PC-9 (cell line): ENCODE measurements at regions of chr4 and their contacts with region 1.

Region 1: DNA sequence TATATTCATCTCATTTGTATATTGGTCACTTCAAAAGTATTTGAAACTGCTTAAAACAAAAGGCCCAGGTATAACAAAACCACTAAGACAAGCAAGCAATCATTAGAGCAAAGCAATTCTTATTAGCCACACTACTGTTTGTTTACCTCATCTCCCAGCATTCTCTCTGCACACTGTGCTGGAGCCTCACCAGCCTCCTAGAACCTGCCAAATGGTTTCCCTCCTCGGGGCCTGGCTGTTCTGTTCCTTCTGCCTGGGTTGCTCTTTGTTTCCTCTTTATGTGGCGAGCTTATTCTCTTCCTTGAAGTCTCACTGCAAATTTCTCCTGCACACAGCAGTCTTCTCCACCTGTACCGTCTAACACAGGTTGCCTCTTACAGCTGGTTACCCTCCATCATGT is 67.5 kb upstream of the MND1 start:
- DNase-seq: no peak
- H3K4me3 ChIP-seq: no peak overlapping the region
- H3K27ac ChIP-seq: no peak overlapping the region
- H3K4me1 ChIP-seq: no peaks in the 10 kb centered on the region
- H3K27me3 ChIP-seq: no peaks in the 10 kb centered on the region
- CTCF ChIP-seq: no peak

Region 2: GRCh38 chr4:153115322-153116290 is 161.4 kb before region 1 on chr4:
- CTCF ChIA-PET with region 1: no interaction called
- POLR2A ChIA-PET with region 1: interaction called, 16 read pairs
- intact Hi-C with region 1: no loop called
- DNase-seq: peak; percentile 45 to 85
- H3K4me3 ChIP-seq: peak overlapping the region; percentile 32; the same call in 1 of the 2 replicates
- H3K27ac ChIP-seq: peak overlapping the region; percentile 54
- H3K4me1 ChIP-seq: peaks cover 16% of the 10 kb centered on the region
- H3K27me3 ChIP-seq: no peaks in the 10 kb centered on the region
- CTCF ChIP-seq: no peak

Region 3: DNA sequence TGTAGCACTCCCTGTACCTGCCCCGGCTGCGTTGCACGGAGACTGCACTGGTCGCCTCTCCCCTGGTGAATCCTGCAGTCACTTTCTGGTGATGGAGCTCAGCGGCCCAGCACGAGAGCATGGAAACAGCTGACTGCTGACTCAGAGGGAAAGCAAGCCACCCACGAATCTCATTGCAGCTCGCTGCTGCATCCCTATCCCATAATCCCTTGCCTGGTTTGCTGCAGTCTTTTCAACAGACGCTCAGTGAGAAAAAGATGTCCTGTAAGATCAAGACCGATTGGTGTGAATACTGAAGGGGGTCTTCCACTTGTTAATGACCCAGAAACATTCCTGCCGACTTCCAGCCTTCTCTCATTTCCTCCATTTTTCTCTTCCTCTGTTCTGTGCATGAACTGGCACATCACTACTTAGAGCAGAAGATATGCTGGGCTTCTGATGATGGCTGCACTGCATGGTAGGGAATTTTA is 19.8 kb before region 1 on chr4:
- CTCF ChIA-PET with region 1: no interaction called
- POLR2A ChIA-PET with region 1: no interaction called
- intact Hi-C with region 1: no loop called
- DNase-seq: no peak
- H3K4me3 ChIP-seq: no peak overlapping the region
- H3K27ac ChIP-seq: no peak overlapping the region
- H3K4me1 ChIP-seq: no peaks in the 10 kb centered on the region
- H3K27me3 ChIP-seq: no peaks in the 10 kb centered on the region
- CTCF ChIP-seq: no peak

Region 4: GRCh38 chr4:153850533-153851280 is 573.7 kb after region 1 on chr4:
- CTCF ChIA-PET with region 1: no interaction called
- POLR2A ChIA-PET with region 1: no interaction called
- intact Hi-C with region 1: no loop called
- DNase-seq: no peak
- H3K4me3 ChIP-seq: no peak overlapping the region
- H3K27ac ChIP-seq: no peak overlapping the region
- H3K4me1 ChIP-seq: no peaks in the 10 kb centered on the region
- H3K27me3 ChIP-seq: no peaks in the 10 kb centered on the region
- CTCF ChIP-seq: no peak